PC-9 (cell line): ENCODE measurements at regions of chr4 and their contacts with region 1.

Region 1: DNA sequence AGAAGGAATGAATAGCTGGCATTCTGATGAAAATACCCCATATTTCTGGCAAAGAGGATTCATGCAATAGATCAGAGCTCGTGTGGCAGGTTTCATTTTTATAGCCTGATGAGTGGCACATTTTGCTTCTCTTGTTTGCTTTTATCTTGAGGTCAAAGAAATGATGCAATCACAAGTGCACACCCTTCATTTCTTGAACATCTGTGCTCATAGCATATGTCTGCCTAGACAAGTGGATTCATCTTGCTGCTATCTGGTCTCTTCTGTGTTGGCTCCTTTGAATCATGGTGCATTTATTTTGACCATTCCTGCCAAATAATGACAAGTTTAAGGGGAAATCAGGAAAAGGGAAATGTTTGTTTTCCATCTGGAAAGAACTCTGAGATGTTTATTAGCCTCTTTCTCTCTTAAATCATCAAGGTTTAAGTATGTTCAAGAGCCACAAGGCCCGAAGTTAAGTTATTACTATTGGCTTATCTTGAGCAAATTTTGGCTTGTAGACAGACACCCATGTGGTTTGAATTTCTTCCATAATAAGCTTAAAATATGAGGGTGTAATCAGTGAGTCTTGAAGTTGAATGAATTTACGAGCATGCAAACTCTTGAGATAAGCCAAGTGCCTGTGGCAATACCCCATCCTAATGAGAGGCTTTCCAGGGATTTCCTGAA is 59.3 kb upstream of the HS3ST1 start:
- DNase-seq: peak in 1 of 2 experiments; percentile 58
- H3K4me3 ChIP-seq: no peak overlapping the region
- H3K27ac ChIP-seq: no peak overlapping the region
- H3K4me1 ChIP-seq: peaks cover 13% of the 10 kb centered on the region
- H3K27me3 ChIP-seq: no peaks in the 10 kb centered on the region
- CTCF ChIP-seq: no peak

Region 2: DNA sequence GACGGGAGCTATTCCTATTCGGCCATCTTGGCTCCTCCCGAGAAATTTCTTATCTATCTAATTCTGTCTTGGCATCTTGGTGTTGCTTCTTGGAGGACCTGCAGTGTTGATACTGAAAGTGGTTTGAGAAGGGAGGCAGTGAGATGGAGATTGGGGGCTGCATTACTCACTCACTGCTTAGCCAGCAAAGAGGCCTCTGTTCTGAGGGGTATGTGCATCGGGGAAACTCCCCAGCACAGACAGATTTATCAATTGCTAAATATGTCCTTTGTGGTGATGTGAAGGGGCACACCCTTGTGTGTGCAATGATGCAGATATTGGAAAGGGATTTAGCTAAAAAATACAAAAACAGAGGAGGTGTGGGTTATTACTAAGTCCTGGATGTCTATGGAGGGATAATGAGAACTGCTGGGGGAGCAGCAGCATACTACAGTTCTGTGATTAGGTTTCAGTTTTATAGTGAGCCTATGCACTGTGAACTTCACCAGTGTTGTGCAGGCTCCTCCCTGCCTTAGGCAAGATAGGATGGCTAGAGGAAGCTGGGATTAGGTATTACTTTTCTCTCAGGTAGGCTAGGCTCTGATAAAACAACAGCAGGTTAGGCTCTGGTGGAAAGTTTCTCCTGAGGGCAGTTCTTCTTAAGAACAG is 338.3 kb before region 1 on chr4:
- CTCF ChIA-PET with region 1: no interaction called
- POLR2A ChIA-PET with region 1: no interaction called
- intact Hi-C with region 1: no loop called
- DNase-seq: no peak
- H3K4me3 ChIP-seq: no peak overlapping the region
- H3K27ac ChIP-seq: no peak overlapping the region
- H3K4me1 ChIP-seq: no peaks in the 10 kb centered on the region
- H3K27me3 ChIP-seq: no peaks in the 10 kb centered on the region
- CTCF ChIP-seq: no peak

Region 3: DNA sequence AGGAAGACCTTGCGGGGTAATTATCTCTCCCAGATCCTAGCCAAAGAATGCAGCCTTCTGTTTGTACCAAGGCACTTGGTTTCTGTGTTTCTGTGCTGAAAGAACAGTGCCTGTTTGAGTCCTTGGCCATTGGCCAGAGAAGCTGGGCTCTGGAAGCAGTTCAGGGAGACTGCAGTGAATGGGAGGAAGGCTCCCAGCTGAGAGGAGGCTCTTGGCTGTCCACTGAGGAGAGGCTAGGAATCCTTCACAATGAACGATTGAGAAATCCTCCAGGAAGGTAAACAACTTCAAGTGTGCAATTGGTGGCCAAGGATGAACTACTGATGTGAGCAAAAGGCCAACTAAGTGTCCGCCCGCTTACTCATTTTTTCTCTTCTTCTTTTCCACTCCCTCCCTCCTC is 120.6 kb before region 1 on chr4:
- CTCF ChIA-PET with region 1: no interaction called
- POLR2A ChIA-PET with region 1: no interaction called
- intact Hi-C with region 1: no loop called
- DNase-seq: peak in 1 of 2 experiments; percentile 7
- H3K4me3 ChIP-seq: no peak overlapping the region
- H3K27ac ChIP-seq: no peak overlapping the region
- H3K4me1 ChIP-seq: no peaks in the 10 kb centered on the region
- H3K27me3 ChIP-seq: no peaks in the 10 kb centered on the region
- CTCF ChIP-seq: no peak

Region 4: GRCh38 chr4:11439836-11440235 is 48.2 kb before region 1 on chr4:
- CTCF ChIA-PET with region 1: no interaction called
- POLR2A ChIA-PET with region 1: no interaction called
- intact Hi-C with region 1: loop called (anchors 5 kb)
- DNase-seq: no peak
- H3K4me3 ChIP-seq: no peak overlapping the region
- H3K27ac ChIP-seq: no peak overlapping the region
- H3K4me1 ChIP-seq: no peaks in the 10 kb centered on the region
- H3K27me3 ChIP-seq: no peaks in the 10 kb centered on the region
- CTCF ChIP-seq: no peak

Region 5: GRCh38 chr4:11566444-11567022 is 78.5 kb after region 1 on chr4:
- CTCF ChIA-PET with region 1: no interaction called
- POLR2A ChIA-PET with region 1: no interaction called
- intact Hi-C with region 1: no loop called
- DNase-seq: no peak
- H3K4me3 ChIP-seq: no peak overlapping the region
- H3K27ac ChIP-seq: no peak overlapping the region
- H3K4me1 ChIP-seq: no peaks in the 10 kb centered on the region
- H3K27me3 ChIP-seq: no peaks in the 10 kb centered on the region
- CTCF ChIP-seq: no peak